Activated naive CD4-positive, alpha-beta T cell treated with anti-CD3 and anti-CD28 coated beads for 36 hours (primary cell): ENCODE measurements at regions of chr1 and their contacts with region 1.

Region 1: DNA sequence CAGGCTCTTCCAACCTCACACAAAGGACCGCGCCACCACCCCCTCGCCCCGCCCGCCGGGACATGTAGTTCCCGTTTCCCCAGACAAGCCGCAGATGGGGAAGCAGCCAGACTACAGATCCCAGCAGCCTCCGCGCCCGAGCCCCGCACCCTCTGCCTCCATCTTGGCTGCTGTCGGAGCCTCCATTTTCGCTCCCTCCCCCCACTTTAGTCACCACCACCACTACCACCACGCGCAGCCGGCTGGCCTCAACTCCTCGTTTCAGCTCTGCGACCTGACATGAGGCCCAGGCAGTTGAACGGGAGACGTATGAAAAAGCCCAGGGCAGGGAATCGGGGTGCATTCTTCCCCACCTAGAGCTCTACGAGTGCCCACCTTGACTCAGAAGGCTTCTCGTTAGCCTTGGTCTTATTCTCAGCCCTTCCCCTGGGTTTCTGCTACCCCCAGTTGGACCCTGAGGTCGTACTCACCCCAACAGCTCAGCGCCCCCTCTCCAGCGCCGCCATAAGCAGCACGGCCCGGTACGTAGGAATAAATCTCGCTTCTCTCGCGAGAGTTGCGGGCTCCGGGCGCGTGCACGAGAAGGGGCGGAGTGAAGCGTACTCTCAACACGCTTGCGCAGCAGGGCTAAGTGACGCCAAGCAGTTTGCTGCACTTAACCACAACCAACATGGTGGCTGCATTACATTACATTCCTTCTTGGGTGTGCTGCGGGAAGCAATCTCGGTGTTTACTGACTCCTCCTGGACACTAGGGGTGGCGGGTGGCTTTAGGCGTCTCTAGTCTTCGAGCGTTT is at the start of gene CSDE1:
- DNase-seq: peak; percentile 99
- H3K4me3 Mint-ChIP-seq: peak within 1 kb of the TSS; percentile 99
- H3K27ac Mint-ChIP-seq: peak within 1 kb of the TSS; percentile 100
- H3K4me1 Mint-ChIP-seq: peaks cover 50% of the 10 kb centered on the region
- H3K27me3 Mint-ChIP-seq: no peaks in the 10 kb centered on the region
- total RNA-seq, gene CSDE1: 533 to 579 TPM

Region 2: GRCh38 chr1:113389953-113390834 is 1367.5 kb before region 1 on chr1 and contains the start of gene MAGI3:
- CTCF ChIA-PET with region 1: no interaction called
- intact Hi-C with region 1: loop called (anchors 5 kb)
- DNase-seq: peak; percentile 97
- H3K4me3 Mint-ChIP-seq: peak within 1 kb of the TSS; percentile 83
- H3K27ac Mint-ChIP-seq: peak within 1 kb of the TSS; percentile 48
- H3K4me1 Mint-ChIP-seq: peaks cover 20% of the 10 kb centered on the region
- H3K27me3 Mint-ChIP-seq: no peaks in the 10 kb centered on the region
- total RNA-seq, gene MAGI3: 5.9 to 6.4 TPM

Region 3: GRCh38 chr1:113928941-113929749 is 828.5 kb before region 1 on chr1 and contains the start of gene HIPK1:
- CTCF ChIA-PET with region 1: no interaction called
- intact Hi-C with region 1: loop called (anchors 1 kb)
- DNase-seq: peak; percentile 94
- H3K4me3 Mint-ChIP-seq: peak within 1 kb of the TSS; percentile 96
- H3K27ac Mint-ChIP-seq: peak within 1 kb of the TSS; percentile 99
- H3K4me1 Mint-ChIP-seq: peaks cover 40% of the 10 kb centered on the region
- H3K27me3 Mint-ChIP-seq: no peaks in the 10 kb centered on the region
- total RNA-seq, gene HIPK1: 47.7 to 51.0 TPM

Region 4: GRCh38 chr1:114511032-114511785 is 246.4 kb before region 1 on chr1 and contains the start of gene TRIM33:
- CTCF ChIA-PET with region 1: no interaction called
- intact Hi-C with region 1: loop called (anchors 1 kb)
- DNase-seq: peak; percentile 92
- H3K4me3 Mint-ChIP-seq: peak within 1 kb of the TSS; percentile 90
- H3K27ac Mint-ChIP-seq: peak within 1 kb of the TSS; percentile 99
- H3K4me1 Mint-ChIP-seq: peaks cover 48% of the 10 kb centered on the region
- H3K27me3 Mint-ChIP-seq: no peaks in the 10 kb centered on the region
- total RNA-seq, gene TRIM33: 23.1 to 25.0 TPM

Region 5: GRCh38 chr1:114716304-114717170 is 41.1 kb before region 1 on chr1 and contains the start of gene NRAS:
- CTCF ChIA-PET with region 1: no interaction called
- intact Hi-C with region 1: loop called (anchors 1 kb)
- DNase-seq: peak; percentile 96
- H3K4me3 Mint-ChIP-seq: peak within 1 kb of the TSS; percentile 98
- H3K27ac Mint-ChIP-seq: peak within 1 kb of the TSS; percentile 99
- H3K4me1 Mint-ChIP-seq: peaks cover 27% of the 10 kb centered on the region
- H3K27me3 Mint-ChIP-seq: no peaks in the 10 kb centered on the region
- total RNA-seq, gene NRAS: 42.1 to 43.9 TPM

Region 6: GRCh38 chr1:115062542-115063011 is 304.9 kb after region 1 on chr1:
- CTCF ChIA-PET with region 1: no interaction called
- intact Hi-C with region 1: loop called (anchors 1 kb)
- DNase-seq: peak; percentile 96
- H3K4me3 Mint-ChIP-seq: no peak overlapping the region
- H3K27ac Mint-ChIP-seq: peak overlapping the region; percentile 74
- H3K4me1 Mint-ChIP-seq: peaks cover 41% of the 10 kb centered on the region
- H3K27me3 Mint-ChIP-seq: no peaks in the 10 kb centered on the region

Region 7: DNA sequence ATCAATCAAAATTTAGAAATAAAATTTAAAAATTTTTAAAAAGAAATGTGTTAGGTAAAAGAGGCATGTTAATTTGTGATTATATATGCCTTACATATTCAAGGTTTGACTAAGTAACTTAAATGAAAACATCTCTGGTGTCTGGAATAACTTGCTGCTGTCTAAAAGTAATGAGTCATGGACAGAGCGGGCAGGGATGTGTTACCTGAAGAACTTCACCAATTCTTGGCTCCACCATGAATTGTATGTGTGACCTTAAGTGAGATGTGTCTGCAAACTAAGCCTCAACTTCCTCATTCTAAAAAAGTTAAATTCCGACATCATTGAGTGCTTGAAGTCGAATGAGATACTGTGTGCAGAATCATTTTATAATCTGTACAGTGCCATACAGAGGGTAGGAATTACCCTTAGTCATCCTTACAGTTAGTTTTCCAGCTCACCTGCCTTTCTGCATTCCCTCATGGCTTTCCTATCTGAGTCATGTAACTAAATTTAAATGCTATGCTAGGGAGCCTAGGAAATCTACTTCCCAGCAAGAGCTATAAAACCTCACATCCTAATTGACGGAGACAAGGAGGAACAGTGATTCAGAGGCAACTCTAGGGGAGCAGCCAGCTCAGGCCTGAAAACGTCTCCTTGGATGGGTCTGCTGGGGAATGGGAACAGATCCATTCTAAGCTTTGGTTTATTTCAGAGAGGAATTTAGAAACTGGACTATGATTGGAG is 432.3 kb after region 1 on chr1:
- CTCF ChIA-PET with region 1: no interaction called
- intact Hi-C with region 1: no loop called
- DNase-seq: no peak
- H3K4me3 Mint-ChIP-seq: no peak overlapping the region
- H3K27ac Mint-ChIP-seq: no peak overlapping the region
- H3K4me1 Mint-ChIP-seq: peaks cover 1% of the 10 kb centered on the region
- H3K27me3 Mint-ChIP-seq: peaks cover 13% of the 10 kb centered on the region